Posterior vena cava (tissue), 2 donors: ENCODE measurements at regions of chr14 and their contacts with region 1.

Region 1: GRCh38 chr14:77457522-77458290 is at the starts of genes AHSA1 and VIPAS39:
- DNase-seq: peak; percentile 98
- total RNA-seq, gene AHSA1: 78.3 to 85.3 TPM
- total RNA-seq, gene VIPAS39: 11.9 to 15.7 TPM

Region 2: GRCh38 chr14:77488558-77488957 is 30.9 kb after region 1 on chr14:
- intact Hi-C with region 1: loop called in 1 of 2 experiments (anchors 1 kb)
- DNase-seq: no peak

Region 3: GRCh38 chr14:77542421-77543239 is 84.9 kb after region 1 on chr14:
- intact Hi-C with region 1: loop called in 1 of 2 experiments (anchors 10 kb)
- DNase-seq: no peak

Region 4: GRCh38 chr14:77554207-77554606 is 96.5 kb after region 1 on chr14:
- intact Hi-C with region 1: loop called (anchors 5 to 10 kb)
- DNase-seq: no peak